Activated CD4-positive, alpha-beta memory T cell treated with anti-CD3 and anti-CD28 coated beads, Interleukin-2, amount 10 ng/mL, durations not matched to agents 7 days and 5 days (primary cell): ENCODE measurements at regions of chr19 and their contacts with region 1.

Region 1: DNA sequence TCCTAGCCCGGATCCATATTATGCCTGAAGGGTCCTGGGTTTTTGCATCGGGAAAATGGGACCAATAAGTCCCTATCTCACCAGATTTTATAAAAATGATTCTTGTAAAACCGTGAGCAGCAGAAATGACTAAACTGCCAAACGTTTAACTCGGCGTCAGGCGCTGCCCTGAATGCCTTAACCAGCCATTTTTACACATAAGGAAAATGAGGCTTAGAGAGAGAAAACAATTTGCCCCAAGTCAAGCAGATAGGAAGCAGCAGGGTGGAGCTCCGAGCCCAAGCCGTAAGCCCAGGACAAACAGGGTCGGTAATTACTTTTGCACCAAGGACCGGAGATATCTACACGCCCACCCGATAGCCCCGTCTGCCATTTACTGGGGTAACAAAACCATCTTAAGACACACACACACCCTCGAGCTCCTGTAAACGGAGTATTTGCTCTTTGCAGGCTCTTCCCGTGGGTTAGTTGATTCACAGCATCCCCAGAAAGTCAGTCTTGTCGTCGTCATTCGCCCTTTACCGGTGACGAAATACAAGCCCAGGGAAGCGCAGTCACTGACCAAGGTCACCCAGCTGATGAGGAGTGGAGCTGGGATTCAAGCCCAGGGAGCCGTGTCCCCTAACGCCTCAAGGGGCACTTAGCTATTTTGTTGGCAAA is 16.0 kb upstream of the MRI1 start:
- DNase-seq: peak; percentile 30
- H3K4me3 Mint-ChIP-seq: peak overlapping the region; percentile 86
- H3K27ac Mint-ChIP-seq: peak overlapping the region; percentile 75
- H3K4me1 Mint-ChIP-seq: peaks cover 28% of the 10 kb centered on the region
- H3K27me3 Mint-ChIP-seq: no peaks in the 10 kb centered on the region

Region 2: DNA sequence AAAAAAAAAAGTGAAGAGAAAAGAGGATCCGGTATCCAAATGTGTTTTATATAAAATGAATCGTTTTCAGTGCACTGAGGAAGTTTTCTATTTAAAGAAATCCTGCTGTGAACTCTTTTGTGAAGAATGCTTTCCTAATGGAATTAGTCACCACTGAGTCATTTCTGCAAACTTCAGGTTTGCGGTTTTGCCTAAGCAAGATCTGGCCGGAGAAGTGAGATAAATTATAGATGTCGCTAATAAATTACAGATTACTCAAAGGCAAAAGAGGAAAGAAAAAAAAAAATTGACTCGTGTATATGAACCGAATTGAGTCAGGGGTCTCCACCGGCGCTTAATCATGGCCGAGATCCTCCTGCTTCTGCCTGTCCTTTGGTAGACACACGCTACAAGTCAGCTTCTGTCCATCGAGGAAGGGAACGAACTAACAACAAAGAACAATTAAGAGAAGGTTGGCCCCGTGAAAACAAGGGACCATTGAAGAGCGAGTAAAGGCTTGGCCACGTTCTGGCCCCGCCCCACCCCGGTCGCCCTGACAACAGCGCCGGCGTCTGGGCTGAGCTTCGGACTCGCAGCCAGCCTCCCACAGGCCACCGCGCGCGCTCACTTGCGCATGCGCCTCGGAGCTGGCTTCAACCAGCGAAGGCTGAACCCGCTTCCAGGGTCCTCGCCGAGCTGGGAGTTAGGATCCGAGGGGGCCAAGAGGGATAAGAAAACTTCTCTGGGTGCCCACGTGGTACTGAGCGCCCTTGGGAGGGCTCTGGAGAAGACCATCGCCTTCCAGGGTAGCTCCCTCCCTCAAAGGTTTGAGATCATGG is 16.9 kb before region 1 on chr19:
- CTCF ChIA-PET with region 1: no interaction called
- POLR2A ChIA-PET with region 1: interaction called, 20 read pairs
- DNase-seq: peak; percentile 95
- H3K4me3 Mint-ChIP-seq: peak overlapping the region; percentile 80
- H3K27ac Mint-ChIP-seq: peak overlapping the region; percentile 92
- H3K4me1 Mint-ChIP-seq: peaks cover 24% of the 10 kb centered on the region
- H3K27me3 Mint-ChIP-seq: no peaks in the 10 kb centered on the region

Region 3: DNA sequence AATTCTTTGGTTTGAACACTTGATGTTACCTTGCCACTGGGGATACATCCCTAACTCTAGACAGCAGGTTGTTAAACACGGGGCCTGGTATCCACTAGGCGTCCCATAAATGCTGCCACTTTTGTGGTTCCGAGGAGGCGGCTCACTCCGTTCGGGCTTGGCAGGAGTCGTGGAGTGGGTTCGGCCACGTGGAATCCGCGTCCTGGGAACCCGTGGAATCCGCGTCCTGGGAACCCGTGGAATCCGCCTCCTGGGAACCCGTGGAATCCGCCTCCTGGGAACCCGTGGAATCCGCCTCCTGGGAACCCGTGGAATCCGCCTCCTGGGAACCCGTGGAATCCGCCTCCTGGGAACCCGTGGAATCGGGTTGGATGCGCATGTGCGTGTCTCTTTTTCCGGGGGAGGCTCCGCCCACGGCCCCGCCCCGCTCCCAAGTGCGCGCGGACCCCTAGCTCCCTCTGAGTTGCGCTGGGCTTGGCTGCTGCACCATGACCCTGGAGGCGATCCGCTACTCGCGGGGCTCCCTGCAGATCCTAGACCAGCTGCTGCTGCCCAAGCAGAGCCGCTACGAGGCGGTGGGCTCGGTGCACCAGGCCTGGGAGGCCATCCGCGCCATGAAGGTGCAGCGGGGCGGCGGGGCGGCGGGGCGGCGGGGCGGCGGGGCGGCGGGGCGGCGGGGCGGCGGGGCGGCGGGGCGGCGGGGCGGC is 16.0 kb after region 1 on chr19 and contains the start of gene MRI1:
- CTCF ChIA-PET with region 1: interaction called, 5 read pairs
- POLR2A ChIA-PET with region 1: interaction called, 34 read pairs
- DNase-seq: peak; percentile 44
- H3K4me3 Mint-ChIP-seq: peak within 1 kb of the TSS; percentile 78
- H3K27ac Mint-ChIP-seq: no peak within 1 kb of the TSS
- H3K4me1 Mint-ChIP-seq: peaks cover 12% of the 10 kb centered on the region
- H3K27me3 Mint-ChIP-seq: no peaks in the 10 kb centered on the region
- total RNA-seq, gene MRI1: 22.4 to 22.7 TPM

Region 4: DNA sequence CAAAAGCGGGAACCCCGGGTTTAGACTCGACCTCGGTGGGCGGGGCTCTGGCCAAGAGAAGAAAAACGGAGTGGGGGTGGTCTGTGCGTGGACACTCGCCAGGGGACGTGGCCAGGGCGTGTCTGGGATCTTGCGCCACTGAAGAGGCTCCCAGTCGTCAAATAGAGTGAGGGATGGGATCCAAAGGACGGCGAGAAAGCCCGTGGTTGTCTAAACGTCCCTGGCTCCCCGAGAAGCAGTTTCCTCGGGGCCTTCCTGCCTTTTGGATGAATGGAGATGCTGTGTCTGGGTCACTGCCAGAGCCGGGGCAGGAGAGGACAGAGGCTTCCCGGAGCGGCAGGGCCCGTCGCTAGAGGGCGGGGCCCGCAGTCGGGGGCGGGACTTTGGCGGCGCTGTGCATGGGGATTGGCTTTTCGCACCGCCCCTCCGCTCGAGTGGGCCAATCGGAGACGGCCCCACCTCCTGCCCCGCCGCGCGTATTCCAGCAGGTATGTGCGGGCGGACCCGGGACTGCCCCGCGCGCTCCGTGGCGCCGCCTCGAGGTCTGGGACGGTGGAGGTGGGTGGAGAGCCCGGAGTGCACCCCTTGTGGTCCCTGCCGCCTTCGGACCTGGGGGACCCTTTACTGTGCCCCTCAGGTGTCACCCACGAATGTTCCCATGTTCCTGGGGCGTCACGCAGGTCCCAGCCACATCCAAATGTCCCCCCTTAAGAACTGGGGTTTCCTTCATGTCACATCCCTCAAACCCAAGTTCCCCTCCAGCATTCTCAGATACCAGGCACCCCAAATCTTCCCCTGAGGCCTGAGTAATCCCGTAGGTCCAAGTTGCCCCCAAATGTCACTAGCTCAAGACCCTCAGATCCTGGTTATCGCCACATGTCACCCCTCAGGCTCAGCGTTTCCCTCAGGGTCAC is 85.3 kb after region 1 on chr19:
- CTCF ChIA-PET with region 1: interaction called, 3 read pairs
- POLR2A ChIA-PET with region 1: interaction called, 13 read pairs
- DNase-seq: peak; percentile 94
- H3K4me3 Mint-ChIP-seq: peak overlapping the region; percentile 74
- H3K27ac Mint-ChIP-seq: peak overlapping the region; percentile 70
- H3K4me1 Mint-ChIP-seq: peaks cover 47% of the 10 kb centered on the region
- H3K27me3 Mint-ChIP-seq: no peaks in the 10 kb centered on the region

Region 5: GRCh38 chr19:13839130-13839937 is 91.0 kb after region 1 on chr19:
- CTCF ChIA-PET with region 1: interaction called, 3 read pairs
- POLR2A ChIA-PET with region 1: interaction called, 13 read pairs
- DNase-seq: peak; percentile 89
- H3K4me3 Mint-ChIP-seq: peak overlapping the region; percentile 98
- H3K27ac Mint-ChIP-seq: peak overlapping the region; percentile 87
- H3K4me1 Mint-ChIP-seq: peaks cover 49% of the 10 kb centered on the region
- H3K27me3 Mint-ChIP-seq: no peaks in the 10 kb centered on the region

Region 6: DNA sequence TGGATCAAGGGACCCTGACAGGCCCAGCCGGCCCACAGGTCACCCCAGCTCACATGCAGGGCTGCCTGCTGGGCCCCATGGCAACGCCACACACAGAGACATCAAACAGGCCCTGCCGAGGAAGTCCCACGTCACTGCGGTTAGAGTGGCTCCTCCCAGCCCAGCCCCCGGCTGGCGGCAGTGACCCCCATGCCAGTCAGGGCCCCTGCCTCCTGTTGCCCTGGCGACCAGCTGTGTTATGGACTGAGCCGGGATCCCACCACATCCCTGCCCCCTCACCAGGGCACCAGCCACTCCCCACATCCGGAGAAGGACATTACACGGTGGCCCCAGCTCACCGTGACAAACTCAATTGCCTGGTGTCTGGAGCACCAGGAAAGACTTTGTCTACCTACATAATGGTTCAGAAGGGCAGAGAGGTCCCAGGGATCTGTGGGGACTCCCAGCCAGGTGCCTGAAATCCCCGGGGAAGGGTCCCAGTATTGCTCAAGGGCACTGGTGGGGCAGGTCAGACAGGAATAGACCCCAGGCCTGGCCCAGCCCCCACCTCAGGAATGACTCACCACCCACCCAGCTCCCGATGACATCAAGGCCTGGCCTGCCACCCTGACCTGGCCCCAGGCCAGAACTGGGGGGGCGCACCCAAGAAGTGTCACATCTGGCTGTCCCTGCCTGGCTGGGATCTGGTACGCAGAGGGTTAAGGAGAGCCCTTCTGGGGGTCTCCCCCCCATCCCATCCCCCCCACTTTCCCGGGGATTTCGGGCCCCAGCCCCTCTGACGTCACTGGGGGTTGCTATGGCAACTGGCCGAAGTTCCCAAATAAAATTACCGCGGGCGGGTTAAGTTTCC is 98.5 kb after region 1 on chr19:
- CTCF ChIA-PET with region 1: no interaction called
- POLR2A ChIA-PET with region 1: interaction called, 22 read pairs
- DNase-seq: peak; percentile 96
- H3K4me3 Mint-ChIP-seq: peak overlapping the region; percentile 80
- H3K27ac Mint-ChIP-seq: peak overlapping the region; percentile 99
- H3K4me1 Mint-ChIP-seq: peaks cover 59% of the 10 kb centered on the region
- H3K27me3 Mint-ChIP-seq: no peaks in the 10 kb centered on the region